ENCODE measurements at regions of chr10 and their contacts with region 1.

Region 1: DNA sequence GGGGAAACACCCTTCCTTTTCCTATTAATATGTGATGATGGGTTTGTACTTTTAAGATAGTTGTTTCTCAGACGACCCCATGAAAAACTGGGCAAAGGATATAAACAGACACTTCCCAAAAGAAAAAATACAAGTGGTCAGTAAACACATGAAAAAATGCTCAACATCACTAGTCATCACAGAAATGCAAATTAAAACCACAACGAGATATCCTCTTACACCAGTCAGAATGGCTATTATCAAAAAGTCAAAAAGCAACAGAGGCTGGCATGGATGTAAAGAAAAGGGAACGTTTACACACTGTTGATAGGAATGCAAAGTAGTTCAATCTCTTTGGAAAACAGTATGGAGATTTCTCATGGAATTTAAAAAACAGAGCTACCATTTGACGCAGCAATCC is 111.4 kb upstream of the ZEB1 start:
- DNase-seq: no peak
- ATAC-seq: no peak
- H3K4me3 ChIP-seq: no peak overlapping the region
- H3K27ac ChIP-seq: no peak overlapping the region
- H3K4me1 ChIP-seq: peaks cover 0 to 26% (median 13%) of the 10 kb centered on the region in 12 donors
- H3K27me3 ChIP-seq: no peaks in the 10 kb centered on the region
- CTCF ChIP-seq: no peak
- POLR2A ChIP-seq: no peak

Region 2: GRCh38 chr10:30974773-30975415 is 232.7 kb before region 1 on chr10:
- intact Hi-C with region 1: no loop called
- DNase-seq: no peak
- ATAC-seq: peak; percentile 72 to 87 (median 83)
- H3K4me3 ChIP-seq: peak overlapping the region in 6 of 12 donors; percentile 3 to 39 (median 16)
- H3K27ac ChIP-seq: peak overlapping the region; percentile 15 to 86 (median 73)
- H3K4me1 ChIP-seq: peaks cover 0 to 55% (median 23%) of the 10 kb centered on the region in 12 donors
- H3K27me3 ChIP-seq: no peaks in the 10 kb centered on the region
- CTCF ChIP-seq: no peak
- POLR2A ChIP-seq: no peak

Region 3: DNA sequence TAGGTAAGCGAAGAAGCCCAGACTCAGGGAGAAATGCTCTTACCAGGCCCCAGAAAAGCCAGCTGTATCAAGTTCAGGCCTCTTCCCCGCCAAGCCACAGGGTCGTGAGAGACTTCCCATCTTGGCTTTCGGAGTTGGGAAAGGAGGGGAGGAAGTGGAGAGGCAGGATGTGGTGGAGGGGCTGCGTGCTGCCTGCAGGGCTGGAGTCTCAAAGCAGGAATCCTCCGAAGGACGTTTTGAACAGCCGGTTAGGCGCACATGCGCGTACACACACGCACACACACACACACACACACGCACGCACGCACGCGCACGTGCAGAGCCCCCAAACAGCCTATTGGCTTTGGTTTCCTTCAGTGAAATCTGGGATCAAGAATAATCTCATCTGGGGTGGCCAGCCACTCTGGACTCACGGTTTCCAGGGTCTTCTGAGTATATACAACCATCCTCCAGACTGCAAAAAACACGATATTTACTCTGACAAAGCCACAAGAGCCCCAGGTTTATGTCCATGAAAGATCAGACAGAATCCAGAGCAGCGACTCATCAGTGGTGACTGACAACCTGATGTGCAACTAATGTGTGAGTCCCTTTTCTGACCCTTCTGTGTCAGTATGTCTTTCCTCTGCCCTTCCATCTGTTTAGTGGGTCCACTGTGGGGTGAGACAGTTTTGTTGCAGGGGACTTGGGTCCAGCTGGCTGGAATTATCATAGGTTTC is 61.0 kb before region 1 on chr10:
- intact Hi-C with region 1: loop called in 1 of 10 experiments (anchors 2 kb)
- DNase-seq: peak; percentile 74 to 82 (median 79)
- ATAC-seq: peak; percentile 69 to 89 (median 78)
- H3K4me3 ChIP-seq: peak overlapping the region in 4 of 12 donors; percentile 4 to 31 (median 6)
- H3K27ac ChIP-seq: peak overlapping the region in 11 of 12 donors; percentile 20 to 82 (median 68)
- H3K4me1 ChIP-seq: peaks cover 0 to 41% (median 18%) of the 10 kb centered on the region in 12 donors
- H3K27me3 ChIP-seq: no peaks in the 10 kb centered on the region
- CTCF ChIP-seq: no peak
- POLR2A ChIP-seq: no peak